K562 (cell line): ENCODE measurements at regions of chr2 and their contacts with region 1.

Region 1: GRCh38 chr2:42249887-42250286 is 80.7 kb downstream of the EML4 start:
- DNase-seq: peak in 1 of 4 experiments; percentile 6
- ATAC-seq: no peak
- H3K4me3 ChIP-seq: no peak overlapping the region
- H3K27ac ChIP-seq: no peak overlapping the region
- H3K4me1 ChIP-seq: no peaks in the 10 kb centered on the region; a peak in 1 of 5 replicates
- H3K27me3 ChIP-seq: no peaks in the 10 kb centered on the region
- CTCF ChIP-seq: no peak
- EP300 ChIP-seq: no peak
- POLR2A ChIP-seq: no peak
- RAD21 ChIP-seq: no peak

Region 2: DNA sequence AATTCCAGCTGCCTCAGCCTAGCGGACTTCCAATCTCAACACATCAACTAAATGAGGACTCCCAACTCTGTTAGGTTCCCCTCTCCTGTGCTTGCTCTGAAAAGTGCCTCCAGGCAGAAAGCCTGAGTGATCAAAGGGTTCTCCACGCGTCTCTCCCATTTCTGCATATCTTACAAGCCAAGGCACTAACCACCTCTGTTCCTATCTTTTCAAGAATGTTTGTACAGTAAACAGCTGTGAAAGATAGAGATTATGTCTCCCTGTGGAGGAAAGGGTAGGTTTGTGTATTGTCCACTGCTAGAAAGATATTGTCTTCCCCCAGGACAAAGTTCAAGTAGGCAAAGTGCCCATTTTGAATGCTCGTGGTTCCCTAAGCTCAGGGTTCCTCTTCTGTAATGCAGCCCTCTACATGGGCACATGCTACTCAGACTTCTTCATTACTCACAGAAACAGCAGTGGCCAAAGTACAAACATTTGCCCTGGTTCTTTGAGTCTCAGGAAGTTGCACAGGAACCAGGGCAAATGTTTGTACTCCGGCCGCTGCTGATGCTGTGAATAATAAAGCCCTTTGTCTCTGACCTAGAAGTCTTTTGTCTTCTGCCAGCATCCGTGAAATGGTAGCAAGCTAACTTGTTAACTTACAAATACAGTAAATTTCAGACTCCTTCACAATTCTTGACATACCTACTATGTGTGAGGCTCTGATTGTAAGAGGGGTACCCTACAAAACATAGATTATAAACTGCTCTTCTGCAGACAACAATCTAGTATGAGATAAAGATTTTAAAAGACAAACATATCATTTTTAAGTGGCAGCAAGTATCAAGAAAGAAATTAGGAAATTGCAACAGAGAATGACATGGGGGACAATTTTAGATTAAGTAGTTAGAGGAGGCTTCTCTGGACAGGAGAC is 157.5 kb before region 1 on chr2:
- CTCF ChIA-PET with region 1: no interaction called
- POLR2A ChIA-PET with region 1: no interaction called
- in situ Hi-C with region 1: no loop called
- intact Hi-C with region 1: no loop called
- DNase-seq: no peak
- ATAC-seq: no peak
- H3K4me3 ChIP-seq: no peak overlapping the region
- H3K27ac ChIP-seq: no peak overlapping the region
- H3K4me1 ChIP-seq: peaks cover 0 to 3% of the 10 kb centered on the region in 2 experiments; a peak in 2 of 5 replicates
- H3K27me3 ChIP-seq: peaks cover 2 to 6% of the 10 kb centered on the region in 2 experiments; a peak in 3 of 5 replicates
- CTCF ChIP-seq: no peak
- EP300 ChIP-seq: no peak
- POLR2A ChIP-seq: no peak
- RAD21 ChIP-seq: no peak

Region 3: DNA sequence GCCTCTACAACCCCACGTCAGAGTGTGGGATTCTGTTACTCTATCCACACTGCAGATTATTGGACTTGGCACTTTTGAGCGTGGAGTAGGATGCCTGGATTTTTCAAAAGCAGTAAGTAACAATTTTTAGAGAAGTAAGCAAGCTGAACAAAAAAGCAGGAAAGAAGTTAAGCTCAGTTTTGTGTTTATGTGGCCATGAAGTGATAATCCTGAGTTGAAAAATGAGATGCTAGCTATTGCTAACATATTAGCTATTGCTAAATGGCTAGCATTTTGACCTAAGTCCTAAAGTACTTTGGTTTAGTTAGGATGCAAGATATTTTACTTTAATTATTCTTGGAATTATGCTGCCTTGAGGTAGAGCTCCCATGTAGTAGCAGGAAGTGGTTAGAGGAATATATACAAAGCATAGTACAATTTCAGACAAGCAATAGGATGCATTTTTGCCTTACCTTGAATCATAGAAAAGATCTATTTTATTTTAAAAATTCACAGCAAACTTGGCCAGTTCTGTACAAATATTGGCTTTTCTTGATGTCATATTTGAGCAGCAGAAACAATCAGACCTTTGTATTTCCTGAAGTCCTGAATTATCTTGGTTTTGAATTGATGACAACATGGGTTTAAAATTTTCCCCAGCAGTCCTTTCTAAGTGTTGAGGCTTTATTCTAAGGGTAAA is 36.5 kb after region 1 on chr2:
- CTCF ChIA-PET with region 1: no interaction called
- POLR2A ChIA-PET with region 1: no interaction called
- in situ Hi-C with region 1: no loop called
- intact Hi-C with region 1: no loop called
- DNase-seq: no peak
- ATAC-seq: no peak
- H3K4me3 ChIP-seq: no peak overlapping the region
- H3K27ac ChIP-seq: no peak overlapping the region
- H3K4me1 ChIP-seq: no peaks in the 10 kb centered on the region
- H3K27me3 ChIP-seq: no peaks in the 10 kb centered on the region
- CTCF ChIP-seq: no peak
- EP300 ChIP-seq: no peak
- POLR2A ChIP-seq: no peak
- RAD21 ChIP-seq: no peak

Region 4: GRCh38 chr2:42360890-42361727 is 111.2 kb after region 1 on chr2 and contains the start of gene COX7A2L:
- CTCF ChIA-PET with region 1: no interaction called
- POLR2A ChIA-PET with region 1: no interaction called
- in situ Hi-C with region 1: no loop called
- intact Hi-C with region 1: loop called (anchors 5 kb)
- DNase-seq: peak; percentile 96 to 99 (median 98)
- ATAC-seq: peak; percentile 93
- H3K4me3 ChIP-seq: peak within 1 kb of the TSS; percentile 99
- H3K27ac ChIP-seq: peak within 1 kb of the TSS; percentile 97
- H3K4me1 ChIP-seq: peaks cover 13 to 27% of the 10 kb centered on the region in 2 experiments; a peak in 4 of 5 replicates
- H3K27me3 ChIP-seq: peaks cover 3 to 11% of the 10 kb centered on the region in 2 experiments; a peak in 4 of 5 replicates
- CTCF ChIP-seq: peak in 2 of 3 experiments; percentile 37 to 61; a peak in 4 of 6 replicates
- EP300 ChIP-seq: 0 out of 2 replicates have a peak, but pooled peaks have one; percentile 13
- POLR2A ChIP-seq: peak; percentile 86
- RAD21 ChIP-seq: peak; percentile 43 to 52; a peak in 3 of 4 replicates
- polyA plus RNA-seq, gene COX7A2L: 366 to 481 TPM

Region 5: DNA sequence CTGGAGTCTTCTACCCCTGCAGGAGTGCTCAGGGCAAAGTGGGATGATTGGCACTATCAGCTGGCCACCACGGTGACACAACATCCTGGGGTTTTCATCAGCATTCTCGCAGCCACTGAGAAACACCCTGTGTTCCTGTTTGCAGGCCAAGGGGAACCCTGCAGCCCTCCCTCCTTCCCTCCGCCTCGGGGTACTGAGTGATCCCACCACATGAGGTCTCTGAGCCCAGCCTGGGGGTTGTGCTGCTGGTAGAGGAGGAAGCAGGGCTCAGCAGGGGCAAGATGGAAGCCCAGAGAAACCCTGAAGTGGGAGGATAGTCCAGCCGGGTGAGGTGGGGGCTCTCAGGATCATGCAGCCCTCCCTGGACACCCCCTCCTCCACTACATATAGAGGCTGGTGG is 514.2 kb after region 1 on chr2 and contains the start of gene OXER1:
- CTCF ChIA-PET with region 1: no interaction called
- POLR2A ChIA-PET with region 1: no interaction called
- in situ Hi-C with region 1: no loop called
- intact Hi-C with region 1: no loop called
- DNase-seq: no peak
- ATAC-seq: no peak
- H3K4me3 ChIP-seq: no peak within 1 kb of the TSS
- H3K27ac ChIP-seq: no peak within 1 kb of the TSS
- H3K4me1 ChIP-seq: peaks cover 0 to 18% of the 10 kb centered on the region in 2 experiments; a peak in 1 of 5 replicates
- H3K27me3 ChIP-seq: peaks cover 3 to 44% of the 10 kb centered on the region in 2 experiments; a peak in 4 of 5 replicates
- CTCF ChIP-seq: no peak
- EP300 ChIP-seq: no peak
- POLR2A ChIP-seq: no peak
- RAD21 ChIP-seq: no peak
- polyA plus RNA-seq, gene OXER1: not detected